ENCODE measurements at regions of chr7 and their contacts with region 1.

Region 1: GRCh38 chr7:90298145-90299038 is 22.7 kb downstream of the FAM237B start:
- DNase-seq: no peak
- H3K4me3 Mint-ChIP-seq: no peak overlapping the region
- H3K27ac Mint-ChIP-seq: no peak overlapping the region
- H3K4me1 Mint-ChIP-seq: no peaks in the 10 kb centered on the region
- H3K27me3 Mint-ChIP-seq: peaks cover 2% of the 10 kb centered on the region

Region 2: GRCh38 chr7:90262438-90262837 is 36.0 kb before region 1 on chr7:
- CTCF ChIA-PET with region 1: no interaction called
- intact Hi-C with region 1: loop called (anchors 5 kb)
- DNase-seq: no peak
- H3K4me3 Mint-ChIP-seq: no peak overlapping the region
- H3K27ac Mint-ChIP-seq: no peak overlapping the region
- H3K4me1 Mint-ChIP-seq: no peaks in the 10 kb centered on the region
- H3K27me3 Mint-ChIP-seq: peaks cover 3% of the 10 kb centered on the region